ENCODE measurements at regions of chr17 and their contacts with region 1.

Region 1: DNA sequence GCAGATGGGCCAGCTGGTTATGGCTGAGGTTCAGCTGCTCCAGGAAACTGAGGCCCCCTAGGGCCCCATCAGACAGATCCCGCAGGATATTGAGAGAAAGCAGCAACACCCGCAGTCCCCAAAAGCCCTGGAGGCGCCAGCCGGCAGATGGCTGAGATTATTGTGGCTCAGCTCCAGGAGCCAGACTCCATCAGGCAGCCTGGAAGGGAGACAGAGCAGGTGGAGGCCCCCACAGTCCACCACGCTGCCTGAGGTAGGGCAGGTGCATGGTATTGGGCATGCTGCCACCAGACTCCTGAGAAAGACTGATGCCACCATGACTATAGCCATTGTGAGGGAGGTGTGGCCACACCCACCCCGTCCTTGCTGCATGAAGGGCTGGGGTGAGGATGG is 9.5 kb upstream of the TMEM101 start:
- DNase-seq: no peak
- H3K4me3 ChIP-seq: no peak overlapping the region
- H3K27ac ChIP-seq: no peak overlapping the region
- H3K4me1 ChIP-seq: no peaks in the 10 kb centered on the region
- H3K27me3 ChIP-seq: no peaks in the 10 kb centered on the region
- CTCF ChIP-seq: no peak

Region 2: GRCh38 chr17:44689477-44690217 is 665.4 kb after region 1 on chr17 and contains the start of gene CCDC43:
- CTCF ChIA-PET with region 1: no interaction called
- POLR2A ChIA-PET with region 1: interaction called, 20 read pairs
- intact Hi-C with region 1: no loop called
- DNase-seq: peak; percentile 81 to 90
- H3K4me3 ChIP-seq: peak within 1 kb of the TSS; percentile 100
- H3K27ac ChIP-seq: peak within 1 kb of the TSS; percentile 55
- H3K4me1 ChIP-seq: peaks cover 14% of the 10 kb centered on the region
- H3K27me3 ChIP-seq: no peaks in the 10 kb centered on the region
- CTCF ChIP-seq: no peak
- total RNA-seq, gene CCDC43: 19.9 and 23.4 TPM in 2 replicates